Heart right ventricle (tissue), 16 donors: ENCODE measurements at regions of chr4 and their contacts with region 1.

Region 1: DNA sequence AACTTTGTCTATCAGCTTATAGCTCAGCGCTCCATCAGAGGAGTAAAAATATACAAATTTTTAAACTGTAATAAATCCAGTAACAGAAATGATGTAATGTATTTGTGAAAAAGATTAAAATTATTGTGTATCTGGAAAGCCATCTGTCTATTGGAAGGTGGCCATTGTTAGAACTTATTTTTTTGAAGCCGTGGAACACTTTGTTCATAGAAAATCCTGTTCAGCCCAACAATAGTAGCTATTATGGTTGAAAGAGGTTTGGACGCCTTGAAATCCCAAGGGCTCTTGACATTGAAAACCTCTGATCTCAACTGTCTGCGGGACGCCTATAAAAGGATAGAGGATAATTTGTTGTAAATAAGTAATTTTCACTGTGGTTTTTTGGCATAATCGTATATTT is 98.3 kb downstream of the RAPGEF2 start:
- DNase-seq: no peak
- ATAC-seq: peak in 5 of 8 donors; percentile 32 to 77 (median 46)
- H3K4me3 ChIP-seq: peak overlapping the region in 1 of 10 donors; percentile 19
- H3K27ac ChIP-seq: peak overlapping the region; percentile 20 to 85 (median 66)
- H3K4me1 ChIP-seq: peaks cover 10 to 88% (median 61%) of the 10 kb centered on the region in 9 donors
- H3K27me3 ChIP-seq: no peaks in the 10 kb centered on the region
- CTCF ChIP-seq: no peak

Region 2: DNA sequence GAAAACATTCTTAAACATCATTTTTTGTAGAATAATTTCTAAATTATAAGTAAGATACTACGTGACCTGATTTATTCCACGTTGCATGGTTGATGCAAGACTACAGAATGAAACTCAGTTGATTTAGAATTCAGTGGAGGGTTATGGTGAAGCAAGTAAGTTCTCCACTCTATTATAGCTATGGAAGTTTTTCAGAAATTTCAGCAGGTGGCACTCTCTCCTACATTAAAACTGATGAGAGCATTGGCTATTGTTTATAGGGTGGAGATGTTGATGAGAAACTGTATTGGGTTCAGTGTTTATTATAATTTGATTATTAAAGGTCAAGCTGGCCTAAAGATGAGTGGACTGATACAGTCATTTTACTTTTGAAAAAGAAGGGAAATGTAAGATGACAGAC is 344.3 kb before region 1 on chr4:
- intact Hi-C with region 1: loop called (anchors 2 to 10 kb)
- DNase-seq: no peak
- ATAC-seq: peak in 7 of 8 donors; percentile 29 to 85 (median 76)
- H3K4me3 ChIP-seq: no peak overlapping the region
- H3K27ac ChIP-seq: no peak overlapping the region
- H3K4me1 ChIP-seq: peaks cover 0 to 18% (median 4%) of the 10 kb centered on the region in 9 donors
- H3K27me3 ChIP-seq: no peaks in the 10 kb centered on the region
- CTCF ChIP-seq: peak in 8 of 9 donors; percentile 23 to 75 (median 60)